BJ (cell line): ENCODE measurements at regions of chr12 and their contacts with region 1.

Region 1: GRCh38 chr12:53287741-53288216 is 7.6 kb upstream of the PFDN5 start:
- DNase-seq: no peak
- H3K4me3 ChIP-seq: no peak overlapping the region
- H3K27me3 ChIP-seq: no peaks in the 10 kb centered on the region
- CTCF ChIP-seq: peak; percentile 73

Region 2: GRCh38 chr12:53241623-53242412 is 46.0 kb before region 1 on chr12:
- CTCF ChIA-PET with region 1: interaction called, 10 read pairs
- POLR2A ChIA-PET with region 1: no interaction called
- DNase-seq: no peak
- H3K4me3 ChIP-seq: no peak overlapping the region
- H3K27me3 ChIP-seq: peaks cover 18% of the 10 kb centered on the region
- CTCF ChIP-seq: no peak

Region 3: GRCh38 chr12:53267999-53268647 is 19.7 kb before region 1 on chr12 and contains the start of gene ESPL1:
- CTCF ChIA-PET with region 1: interaction called, 22 read pairs
- POLR2A ChIA-PET with region 1: interaction called, 6 read pairs
- DNase-seq: peak; percentile 26
- H3K4me3 ChIP-seq: peak within 1 kb of the TSS; percentile 78
- H3K27me3 ChIP-seq: no peaks in the 10 kb centered on the region
- CTCF ChIP-seq: peak; percentile 31; the same call in 1 of the 2 replicates
- polyA plus RNA-seq, gene ESPL1: 3.0 and 7.3 TPM in 2 replicates

Region 4: DNA sequence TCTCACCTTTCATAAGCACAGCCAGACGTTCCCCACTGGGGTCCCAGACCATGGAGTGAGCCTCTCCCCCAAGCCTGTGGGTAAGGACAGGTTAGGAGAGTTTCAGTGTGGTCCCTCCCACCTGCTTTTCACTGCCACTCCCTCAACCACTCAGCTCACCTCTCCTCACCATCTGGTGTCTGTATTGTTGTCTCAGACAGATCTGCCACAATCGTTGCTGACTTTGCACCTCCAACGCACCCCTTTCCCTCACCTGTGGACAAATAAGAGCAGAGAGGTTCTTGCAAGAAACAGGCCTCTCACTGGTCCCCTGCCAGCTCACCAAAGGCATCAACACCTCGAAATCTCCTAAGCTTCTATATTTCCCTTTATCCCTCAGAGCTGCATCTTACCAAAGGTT is 20.5 kb after region 1 on chr12:
- CTCF ChIA-PET with region 1: no interaction called
- POLR2A ChIA-PET with region 1: no interaction called
- DNase-seq: no peak
- H3K4me3 ChIP-seq: no peak overlapping the region
- H3K27me3 ChIP-seq: no peaks in the 10 kb centered on the region
- CTCF ChIP-seq: no peak